Activated CD8-positive, alpha-beta T cell treated with anti-CD3 and anti-CD28 coated beads, Interleukin-2, amount 10 ng/mL, durations not matched to agents 7 days and 5 days (primary cell): ENCODE measurements at regions of chr19 and their contacts with region 1.

Region 1: GRCh38 chr19:14347999-14348889 is 33.0 kb upstream of the ADGRE5 start:
- DNase-seq: peak; percentile 74
- ATAC-seq: peak; percentile 73
- H3K4me3 Mint-ChIP-seq: peak overlapping the region; percentile 52
- H3K27ac Mint-ChIP-seq: peak overlapping the region; percentile 39
- H3K4me1 Mint-ChIP-seq: peaks cover 21% of the 10 kb centered on the region
- H3K27me3 Mint-ChIP-seq: no peaks in the 10 kb centered on the region

Region 2: DNA sequence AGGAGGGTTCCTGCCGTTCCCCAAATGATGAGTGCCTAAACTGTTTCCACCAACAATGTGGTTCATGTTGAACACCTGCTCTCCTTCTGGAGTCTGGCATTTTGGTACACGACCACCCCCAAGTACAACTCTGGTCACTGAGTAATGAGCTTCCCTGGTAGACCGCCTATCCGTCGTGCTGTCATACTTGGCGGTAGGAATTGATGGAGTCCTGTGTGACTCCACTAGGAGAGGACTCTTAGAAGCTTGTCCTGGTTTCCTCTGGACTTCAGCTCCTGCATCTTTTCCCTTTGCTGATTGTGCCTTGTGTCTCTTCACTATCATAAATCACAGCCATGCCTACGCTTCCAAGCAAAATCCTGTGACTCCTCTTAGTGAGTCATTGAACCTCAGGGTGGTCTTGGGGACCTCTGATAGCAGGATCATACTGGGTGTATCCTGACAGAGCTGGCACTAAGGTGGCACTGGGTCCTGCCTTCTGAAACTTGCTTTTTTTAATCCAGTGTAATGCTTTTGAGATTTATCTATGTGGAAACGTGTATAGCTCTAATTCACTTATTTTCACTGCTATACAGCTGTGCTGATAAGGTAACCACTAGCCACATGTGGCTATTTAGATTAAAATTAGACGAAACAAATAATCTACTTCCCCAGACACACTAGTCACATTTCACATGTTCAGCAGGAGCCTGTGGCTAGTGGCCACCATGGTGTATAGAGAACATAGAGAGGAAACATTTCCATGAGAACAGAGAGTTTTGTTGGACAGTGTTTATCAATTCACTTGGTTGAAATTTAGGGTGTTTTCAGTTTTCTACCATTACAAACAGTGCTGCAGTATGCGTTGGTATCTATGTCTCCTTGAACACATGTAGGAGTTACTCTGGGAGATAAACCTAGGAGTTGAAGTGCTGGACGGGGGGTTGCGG is 205.7 kb before region 1 on chr19:
- CTCF ChIA-PET with region 1: interaction called, 76 read pairs
- POLR2A ChIA-PET with region 1: no interaction called
- DNase-seq: no peak
- ATAC-seq: no peak
- H3K4me3 Mint-ChIP-seq: no peak overlapping the region
- H3K27ac Mint-ChIP-seq: no peak overlapping the region
- H3K4me1 Mint-ChIP-seq: peaks cover 31% of the 10 kb centered on the region
- H3K27me3 Mint-ChIP-seq: no peaks in the 10 kb centered on the region

Region 3: GRCh38 chr19:14198384-14199376 is 149.6 kb before region 1 on chr19:
- CTCF ChIA-PET with region 1: interaction called, 117 read pairs
- POLR2A ChIA-PET with region 1: no interaction called
- DNase-seq: no peak
- ATAC-seq: no peak
- H3K4me3 Mint-ChIP-seq: no peak overlapping the region
- H3K27ac Mint-ChIP-seq: no peak overlapping the region
- H3K4me1 Mint-ChIP-seq: peaks cover 19% of the 10 kb centered on the region
- H3K27me3 Mint-ChIP-seq: peaks cover 8% of the 10 kb centered on the region

Region 4: DNA sequence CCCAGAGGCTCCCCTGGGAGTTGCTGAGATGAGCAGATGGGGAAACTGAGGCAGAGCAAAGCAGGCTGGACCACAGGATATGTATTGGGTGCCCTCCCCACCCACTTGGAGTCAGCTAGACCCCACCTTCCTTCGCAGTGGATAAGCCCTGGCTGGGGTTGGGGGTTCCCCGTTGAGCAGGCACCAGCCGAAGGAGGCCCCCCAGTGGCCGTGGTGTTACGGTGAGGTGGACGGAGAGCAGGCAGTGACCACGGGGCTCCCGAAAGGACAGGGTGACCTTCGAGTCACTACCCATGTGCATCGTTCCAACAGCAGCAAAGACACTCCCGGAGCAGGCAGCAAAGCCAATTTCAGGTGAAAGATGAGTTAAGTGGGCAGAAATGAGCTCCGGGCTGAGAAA is 29.4 kb before region 1 on chr19:
- CTCF ChIA-PET with region 1: interaction called, 11 read pairs
- POLR2A ChIA-PET with region 1: no interaction called
- DNase-seq: no peak
- ATAC-seq: no peak
- H3K4me3 Mint-ChIP-seq: no peak overlapping the region
- H3K27ac Mint-ChIP-seq: no peak overlapping the region
- H3K4me1 Mint-ChIP-seq: no peaks in the 10 kb centered on the region
- H3K27me3 Mint-ChIP-seq: no peaks in the 10 kb centered on the region

Region 5: DNA sequence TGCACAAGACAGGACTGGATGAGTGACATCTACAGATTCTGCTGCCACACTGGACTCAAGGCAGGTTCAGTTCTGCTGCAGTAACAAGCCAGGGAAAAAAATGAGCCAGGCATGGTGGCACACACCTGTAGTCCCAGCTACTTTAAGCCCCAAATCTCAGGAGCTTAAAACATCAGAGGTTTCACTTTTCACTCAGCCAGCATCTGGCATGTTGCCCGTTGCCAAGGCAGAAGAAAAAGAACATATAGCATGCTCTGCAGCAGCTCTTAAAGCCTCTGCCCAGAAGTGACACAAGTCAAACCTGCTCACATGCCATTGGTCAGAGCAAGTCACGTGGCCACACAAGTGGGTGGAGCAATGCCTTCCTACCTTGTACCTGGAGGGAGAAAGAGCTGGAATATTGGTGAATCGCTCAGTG is 18.3 kb after region 1 on chr19:
- CTCF ChIA-PET with region 1: interaction called, 23 read pairs
- POLR2A ChIA-PET with region 1: no interaction called
- DNase-seq: peak; percentile 92
- ATAC-seq: peak; percentile 38
- H3K4me3 Mint-ChIP-seq: peak overlapping the region; percentile 45
- H3K27ac Mint-ChIP-seq: peak overlapping the region; percentile 86
- H3K4me1 Mint-ChIP-seq: peaks cover 76% of the 10 kb centered on the region
- H3K27me3 Mint-ChIP-seq: no peaks in the 10 kb centered on the region

Region 6: DNA sequence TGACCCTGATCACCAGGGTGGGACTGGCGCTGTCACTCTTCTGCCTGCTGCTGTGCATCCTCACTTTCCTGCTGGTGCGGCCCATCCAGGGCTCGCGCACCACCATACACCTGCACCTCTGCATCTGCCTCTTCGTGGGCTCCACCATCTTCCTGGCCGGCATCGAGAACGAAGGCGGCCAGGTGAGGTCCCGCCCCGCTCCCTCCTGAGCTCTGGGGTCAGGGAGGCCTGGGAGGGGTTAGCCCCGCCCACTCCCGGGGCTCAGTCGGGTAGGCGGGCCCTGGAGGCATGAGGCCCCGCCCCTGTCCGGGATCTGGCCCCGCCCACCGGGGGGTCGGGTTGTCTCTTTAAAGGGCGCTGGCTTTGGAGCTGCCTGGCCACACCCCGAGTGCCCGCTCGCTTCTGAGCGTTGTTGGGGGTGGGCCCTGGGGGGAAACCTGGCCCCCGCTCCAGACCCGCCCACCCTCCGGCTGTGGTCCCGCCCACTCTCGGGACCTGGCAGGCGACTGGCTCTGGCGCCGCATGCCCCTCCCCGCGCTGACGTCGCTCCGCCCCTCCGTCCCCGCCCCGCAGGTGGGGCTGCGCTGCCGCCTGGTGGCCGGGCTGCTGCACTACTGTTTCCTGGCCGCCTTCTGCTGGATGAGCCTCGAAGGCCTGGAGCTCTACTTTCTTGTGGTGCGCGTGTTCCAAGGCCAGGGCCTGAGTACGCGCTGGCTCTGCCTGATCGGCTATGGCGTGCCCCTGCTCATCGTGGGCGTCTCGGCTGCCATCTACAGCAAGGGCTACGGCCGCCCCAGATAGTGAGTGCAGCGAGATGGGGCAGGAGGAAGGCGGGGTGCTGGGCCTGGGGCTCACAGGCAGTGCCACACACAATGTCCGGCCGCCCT is 57.8 kb after region 1 on chr19:
- CTCF ChIA-PET with region 1: interaction called, 15 read pairs
- POLR2A ChIA-PET with region 1: interaction called, 4 read pairs
- DNase-seq: peak; percentile 91
- ATAC-seq: peak; percentile 54
- H3K4me3 Mint-ChIP-seq: no peak overlapping the region
- H3K27ac Mint-ChIP-seq: peak overlapping the region; percentile 77
- H3K4me1 Mint-ChIP-seq: peaks cover 30% of the 10 kb centered on the region
- H3K27me3 Mint-ChIP-seq: no peaks in the 10 kb centered on the region